ENCODE measurements at regions of chr2 and their contacts with region 1.

Region 1: GRCh38 chr2:187499941-187500532 is 52.0 kb upstream of the CALCRL start:
- DNase-seq: peak; percentile 5
- H3K4me3 ChIP-seq: no peak overlapping the region
- CTCF ChIP-seq: peak; percentile 56

Region 2: GRCh38 chr2:187519419-187520120 is 19.5 kb after region 1 on chr2:
- CTCF ChIA-PET with region 1: interaction called, 11 read pairs
- POLR2A ChIA-PET with region 1: no interaction called
- DNase-seq: no peak
- H3K4me3 ChIP-seq: no peak overlapping the region
- CTCF ChIP-seq: no peak

Region 3: GRCh38 chr2:187541086-187542085 is 41.3 kb after region 1 on chr2:
- CTCF ChIA-PET with region 1: interaction called, 12 read pairs
- POLR2A ChIA-PET with region 1: no interaction called
- DNase-seq: peak; percentile 89
- H3K4me3 ChIP-seq: no peak overlapping the region; the same call in 1 of the 2 replicates
- CTCF ChIP-seq: no peak

Region 4: GRCh38 chr2:187567126-187567525 is 67.1 kb after region 1 on chr2:
- CTCF ChIA-PET with region 1: interaction called, 27 read pairs
- POLR2A ChIA-PET with region 1: no interaction called
- DNase-seq: peak; percentile 40
- H3K4me3 ChIP-seq: no peak overlapping the region
- CTCF ChIP-seq: no peak

Region 5: GRCh38 chr2:187581125-187581896 is 81.3 kb after region 1 on chr2:
- CTCF ChIA-PET with region 1: interaction called, 718 read pairs
- POLR2A ChIA-PET with region 1: no interaction called
- DNase-seq: no peak
- H3K4me3 ChIP-seq: no peak overlapping the region
- CTCF ChIP-seq: peak; percentile 50

Region 6: GRCh38 chr2:187618813-187619212 is 118.8 kb after region 1 on chr2:
- CTCF ChIA-PET with region 1: interaction called, 17 read pairs
- POLR2A ChIA-PET with region 1: no interaction called
- DNase-seq: no peak
- H3K4me3 ChIP-seq: no peak overlapping the region
- CTCF ChIP-seq: no peak

Region 7: DNA sequence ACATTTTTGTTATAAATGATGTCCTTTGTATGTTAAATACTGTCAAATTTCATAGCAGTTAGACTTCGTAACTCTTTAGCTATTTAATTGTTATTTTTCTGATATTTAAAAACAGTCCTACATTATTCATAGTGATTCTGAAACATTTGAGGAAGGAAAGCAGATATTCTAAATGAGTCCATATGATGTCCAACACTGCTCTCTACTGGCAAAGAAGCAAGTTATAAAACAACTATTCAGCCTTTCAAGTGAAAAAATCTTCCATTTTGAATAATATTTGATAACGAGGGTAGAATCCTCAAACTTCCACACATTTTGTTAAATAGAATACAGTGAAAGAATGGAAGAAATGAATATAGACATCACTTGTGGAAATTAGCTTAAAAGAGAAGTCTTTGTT is 1012.4 kb after region 1 on chr2:
- CTCF ChIA-PET with region 1: interaction called, 25 read pairs
- POLR2A ChIA-PET with region 1: no interaction called
- DNase-seq: no peak
- H3K4me3 ChIP-seq: no peak overlapping the region
- CTCF ChIP-seq: peak; percentile 17